ENCODE measurements at regions of chr9 and their contacts with region 1.

Region 1: GRCh38 chr9:69223605-69224004 is 49.5 kb downstream of the TJP2 start:
- DNase-seq: peak; percentile 69
- ATAC-seq: peak; percentile 95
- H3K4me3 Mint-ChIP-seq: no peak overlapping the region
- H3K27ac Mint-ChIP-seq: peak overlapping the region; percentile 87
- H3K4me1 Mint-ChIP-seq: peaks cover 36% of the 10 kb centered on the region
- H3K27me3 Mint-ChIP-seq: no peaks in the 10 kb centered on the region
- CTCF ChIP-seq: peak; percentile 59

Region 2: GRCh38 chr9:69199769-69200470 is 23.7 kb before region 1 on chr9:
- CTCF ChIA-PET with region 1: interaction called, 11 read pairs
- POLR2A ChIA-PET with region 1: no interaction called
- DNase-seq: peak; percentile 19
- ATAC-seq: peak; percentile 38
- H3K4me3 Mint-ChIP-seq: no peak overlapping the region
- H3K27ac Mint-ChIP-seq: peak overlapping the region; percentile 56
- H3K4me1 Mint-ChIP-seq: peaks cover 73% of the 10 kb centered on the region
- H3K27me3 Mint-ChIP-seq: no peaks in the 10 kb centered on the region
- CTCF ChIP-seq: no peak

Region 3: GRCh38 chr9:69207503-69207902 is 16.1 kb before region 1 on chr9:
- CTCF ChIA-PET with region 1: interaction called, 27 read pairs
- POLR2A ChIA-PET with region 1: no interaction called
- DNase-seq: no peak
- ATAC-seq: peak; percentile 73
- H3K4me3 Mint-ChIP-seq: no peak overlapping the region
- H3K27ac Mint-ChIP-seq: peak overlapping the region; percentile 26; the same call in 1 of the 2 replicates
- H3K4me1 Mint-ChIP-seq: peaks cover 59% of the 10 kb centered on the region
- H3K27me3 Mint-ChIP-seq: no peaks in the 10 kb centered on the region
- CTCF ChIP-seq: no peak

Region 4: GRCh38 chr9:69237702-69238295 is 14.2 kb after region 1 on chr9:
- CTCF ChIA-PET with region 1: interaction called, 19 read pairs
- POLR2A ChIA-PET with region 1: no interaction called
- DNase-seq: no peak
- ATAC-seq: no peak
- H3K4me3 Mint-ChIP-seq: no peak overlapping the region
- H3K27ac Mint-ChIP-seq: peak overlapping the region; percentile 17
- H3K4me1 Mint-ChIP-seq: peaks cover 12% of the 10 kb centered on the region
- H3K27me3 Mint-ChIP-seq: no peaks in the 10 kb centered on the region
- CTCF ChIP-seq: no peak

Region 5: GRCh38 chr9:69243116-69243515 is 19.5 kb after region 1 on chr9:
- CTCF ChIA-PET with region 1: interaction called, 19 read pairs
- POLR2A ChIA-PET with region 1: no interaction called
- DNase-seq: no peak
- ATAC-seq: no peak
- H3K4me3 Mint-ChIP-seq: no peak overlapping the region
- H3K27ac Mint-ChIP-seq: no peak overlapping the region
- H3K4me1 Mint-ChIP-seq: no peaks in the 10 kb centered on the region
- H3K27me3 Mint-ChIP-seq: no peaks in the 10 kb centered on the region
- CTCF ChIP-seq: no peak

Measured in WTC11 (cell line).